ENCODE measurements at regions of chr3 and their contacts with region 1.

Region 1: GRCh38 chr3:41726891-41727290 is 235.0 kb downstream of the ULK4 start:
- DNase-seq: no peak
- ATAC-seq: no peak
- H3K4me3 ChIP-seq: no peak overlapping the region
- H3K27ac ChIP-seq: no peak overlapping the region
- H3K4me1 ChIP-seq: no peaks in the 10 kb centered on the region; the same call in 1 of the 2 replicates
- H3K27me3 ChIP-seq: no peaks in the 10 kb centered on the region
- CTCF ChIP-seq: no peak
- EP300 ChIP-seq: no peak
- POLR2A ChIP-seq: no peak
- RAD21 ChIP-seq: no peak

Region 2: DNA sequence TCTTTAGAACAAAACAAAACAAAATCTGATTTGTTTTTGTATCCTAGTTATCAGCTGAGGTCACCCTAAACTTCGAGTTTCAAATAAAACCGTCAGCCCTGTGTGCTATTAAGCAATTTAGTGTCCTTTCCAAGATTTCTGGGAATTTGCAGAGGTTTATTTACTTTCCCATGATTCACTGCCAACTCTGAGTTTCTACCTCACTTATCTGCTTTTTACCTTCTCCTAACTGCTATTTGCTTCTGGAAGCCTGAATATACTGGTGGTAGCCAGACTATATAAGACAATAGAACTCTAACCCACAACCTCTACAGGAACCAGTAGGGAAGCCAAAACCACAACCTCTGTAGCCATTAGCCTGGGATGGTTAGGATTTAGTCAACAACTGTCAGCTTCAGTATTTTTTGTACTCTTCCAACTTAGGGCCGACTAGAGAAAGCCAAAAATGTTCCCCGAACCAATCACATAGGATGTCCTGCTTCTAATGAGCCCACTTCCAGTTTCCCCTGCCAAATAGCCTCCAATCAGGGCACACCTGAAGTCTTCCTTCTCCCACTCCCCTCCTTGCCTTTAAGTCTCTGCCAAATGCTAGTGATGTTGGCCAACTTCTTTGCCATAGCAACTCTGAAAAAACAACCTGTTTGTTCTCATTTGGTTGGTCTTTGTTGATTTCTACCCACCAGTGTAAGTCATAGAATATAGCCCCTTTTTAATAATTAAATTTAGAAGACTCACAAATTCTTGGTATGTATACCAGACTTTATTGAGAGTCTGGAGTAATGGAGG is 38.1 kb before region 1 on chr3:
- CTCF ChIA-PET with region 1: no interaction called
- POLR2A ChIA-PET with region 1: no interaction called
- in situ Hi-C with region 1: no loop called
- intact Hi-C with region 1: loop called (anchors 1 kb)
- DNase-seq: peak; percentile 31
- ATAC-seq: no peak
- H3K4me3 ChIP-seq: no peak overlapping the region
- H3K27ac ChIP-seq: no peak overlapping the region
- H3K4me1 ChIP-seq: peaks cover 14% of the 10 kb centered on the region
- H3K27me3 ChIP-seq: no peaks in the 10 kb centered on the region
- CTCF ChIP-seq: no peak
- EP300 ChIP-seq: no peak
- POLR2A ChIP-seq: no peak
- RAD21 ChIP-seq: no peak